Activated CD8-positive, alpha-beta T cell treated with anti-CD3 and anti-CD28 coated beads for 36 hours (primary cell): ENCODE measurements at regions of chr10 and their contacts with region 1.

Region 1: DNA sequence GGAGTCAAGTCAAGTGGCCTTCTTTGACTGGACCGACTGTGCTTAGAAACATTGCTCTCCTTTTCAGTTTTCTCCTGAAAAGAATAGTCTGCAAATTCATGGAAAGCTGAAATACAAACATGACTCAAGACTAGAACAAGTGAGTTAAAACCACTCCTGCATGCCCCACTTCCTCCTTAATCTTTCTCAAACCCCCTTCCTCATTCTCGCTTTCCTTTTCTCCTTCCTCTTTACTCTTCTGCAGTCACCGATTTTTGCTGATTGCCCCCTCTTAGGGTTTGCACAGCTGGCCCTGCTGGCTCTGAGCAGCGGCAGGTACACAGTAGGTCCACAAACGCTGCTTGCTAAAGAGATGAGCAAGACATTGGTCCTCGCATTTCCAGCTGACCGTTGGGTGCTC is 34.8 kb upstream of the MKI67 start:
- DNase-seq: no peak
- ATAC-seq: no peak
- H3K4me3 Mint-ChIP-seq: no peak overlapping the region
- H3K27ac Mint-ChIP-seq: no peak overlapping the region
- H3K4me1 Mint-ChIP-seq: peaks cover 9% of the 10 kb centered on the region
- H3K27me3 Mint-ChIP-seq: no peaks in the 10 kb centered on the region
- CTCF ChIP-seq: no peak

Region 2: GRCh38 chr10:127906548-127907377 is 254.3 kb before region 1 on chr10 and contains the start of gene PTPRE:
- CTCF ChIA-PET with region 1: no interaction called
- POLR2A ChIA-PET with region 1: no interaction called
- intact Hi-C with region 1: loop called (anchors 10 kb)
- DNase-seq: peak; percentile 73
- ATAC-seq: peak; percentile 99
- H3K4me3 Mint-ChIP-seq: no peak within 1 kb of the TSS
- H3K27ac Mint-ChIP-seq: no peak within 1 kb of the TSS
- H3K4me1 Mint-ChIP-seq: no peaks in the 10 kb centered on the region
- H3K27me3 Mint-ChIP-seq: peaks cover 31% of the 10 kb centered on the region
- CTCF ChIP-seq: peak; percentile 86
- total RNA-seq, gene PTPRE: 19.9 to 22.3 TPM

Region 3: DNA sequence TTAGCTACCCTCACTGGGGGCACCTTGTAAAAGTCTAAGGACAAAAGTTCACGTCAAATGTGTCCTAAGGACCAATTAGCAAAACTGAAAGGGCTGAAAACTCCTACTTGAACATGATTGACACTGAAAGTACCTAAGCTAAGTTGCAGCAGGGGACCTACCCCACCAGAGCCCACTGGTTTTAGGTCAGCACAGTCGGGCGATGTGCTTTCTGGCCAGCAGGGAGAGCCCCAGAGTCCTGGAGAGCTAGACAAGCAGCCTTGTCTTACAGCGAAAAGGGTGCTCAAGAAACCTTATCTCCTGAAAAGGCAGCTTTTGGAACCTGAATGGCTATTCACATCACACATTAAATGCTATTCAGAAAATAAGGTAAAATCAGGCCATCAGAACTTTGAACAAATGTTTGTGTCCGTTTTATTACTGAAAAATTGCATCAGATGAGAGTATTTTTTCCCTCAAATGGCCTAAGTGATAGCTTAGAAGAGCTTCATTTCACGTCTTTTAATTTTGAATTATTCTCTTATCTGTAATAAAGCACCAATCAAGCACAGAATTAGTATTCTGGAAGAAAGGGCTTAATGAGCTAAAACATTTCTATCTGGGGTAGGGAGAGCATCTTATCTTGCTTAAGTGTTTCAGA is 17.4 kb after region 1 on chr10:
- CTCF ChIA-PET with region 1: interaction called, 31 read pairs
- POLR2A ChIA-PET with region 1: interaction called, 3 read pairs
- intact Hi-C with region 1: no loop called
- DNase-seq: peak; percentile 76
- ATAC-seq: peak; percentile 84
- H3K4me3 Mint-ChIP-seq: no peak overlapping the region
- H3K27ac Mint-ChIP-seq: no peak overlapping the region
- H3K4me1 Mint-ChIP-seq: peaks cover 25% of the 10 kb centered on the region
- H3K27me3 Mint-ChIP-seq: no peaks in the 10 kb centered on the region
- CTCF ChIP-seq: peak; percentile 69

Region 4: GRCh38 chr10:128211953-128212727 is 51.1 kb after region 1 on chr10:
- CTCF ChIA-PET with region 1: interaction called, 10 read pairs
- POLR2A ChIA-PET with region 1: no interaction called
- intact Hi-C with region 1: no loop called
- DNase-seq: peak; percentile 88
- ATAC-seq: peak; percentile 91
- H3K4me3 Mint-ChIP-seq: peak overlapping the region; percentile 62
- H3K27ac Mint-ChIP-seq: no peak overlapping the region
- H3K4me1 Mint-ChIP-seq: peaks cover 13% of the 10 kb centered on the region
- H3K27me3 Mint-ChIP-seq: no peaks in the 10 kb centered on the region
- CTCF ChIP-seq: peak; percentile 92